Panc1 (cell line): ENCODE measurements at regions of chr17 and their contacts with region 1.

Region 1: GRCh38 chr17:59490216-59490615 is 75.2 kb upstream of the DHX40 start:
- DNase-seq: no peak
- ATAC-seq: no peak
- H3K4me3 ChIP-seq: no peak overlapping the region
- H3K27ac ChIP-seq: no peak overlapping the region
- H3K4me1 ChIP-seq: no peaks in the 10 kb centered on the region
- H3K27me3 ChIP-seq: no peaks in the 10 kb centered on the region
- CTCF ChIP-seq: no peak

Region 2: DNA sequence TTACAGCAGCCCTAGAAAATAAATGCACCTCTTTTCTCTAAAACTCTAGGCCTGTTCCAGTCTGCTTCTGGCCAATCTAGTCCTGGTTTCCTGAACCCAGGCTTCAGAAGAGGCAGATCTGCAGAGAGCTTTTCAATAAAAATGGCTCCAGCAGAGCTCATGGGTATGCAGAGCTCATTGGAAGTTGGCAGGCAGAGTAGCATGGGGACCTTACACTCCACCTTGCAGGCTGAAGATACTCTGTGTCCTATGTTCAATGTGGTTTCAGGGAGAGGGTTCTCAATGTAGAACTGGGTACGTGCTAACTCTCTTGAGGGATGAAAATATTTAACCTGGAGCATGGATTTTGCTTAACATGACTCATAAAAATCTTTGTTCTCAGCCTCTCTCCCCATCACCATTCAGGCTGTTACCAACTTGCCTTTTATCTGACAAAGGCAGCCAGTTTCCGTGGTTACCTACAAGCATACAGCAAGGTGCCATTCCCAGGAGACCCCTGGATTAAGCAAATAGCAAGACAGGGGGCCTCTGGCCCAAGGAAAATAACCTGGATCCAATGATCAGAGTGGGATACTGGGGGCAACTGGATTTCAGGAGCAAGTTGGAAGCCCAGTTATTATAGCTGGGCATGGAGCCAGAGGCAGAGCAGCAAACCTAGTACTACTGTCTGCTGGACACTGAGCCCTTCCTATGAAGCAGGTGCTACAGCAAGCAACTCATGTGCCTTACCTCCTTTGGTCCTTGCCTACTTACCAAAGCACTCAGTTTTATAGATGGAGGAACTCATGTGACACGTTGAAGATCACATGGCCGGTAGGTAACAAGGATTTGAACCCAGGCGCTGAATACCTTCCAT is 23.0 kb before region 1 on chr17:
- CTCF ChIA-PET with region 1: no interaction called
- POLR2A ChIA-PET with region 1: interaction called, 11 read pairs
- in situ Hi-C with region 1: no loop called
- intact Hi-C with region 1: no loop called
- DNase-seq: no peak
- ATAC-seq: no peak
- H3K4me3 ChIP-seq: no peak overlapping the region
- H3K27ac ChIP-seq: no peak overlapping the region
- H3K4me1 ChIP-seq: no peaks in the 10 kb centered on the region
- H3K27me3 ChIP-seq: no peaks in the 10 kb centered on the region
- CTCF ChIP-seq: no peak

Region 3: DNA sequence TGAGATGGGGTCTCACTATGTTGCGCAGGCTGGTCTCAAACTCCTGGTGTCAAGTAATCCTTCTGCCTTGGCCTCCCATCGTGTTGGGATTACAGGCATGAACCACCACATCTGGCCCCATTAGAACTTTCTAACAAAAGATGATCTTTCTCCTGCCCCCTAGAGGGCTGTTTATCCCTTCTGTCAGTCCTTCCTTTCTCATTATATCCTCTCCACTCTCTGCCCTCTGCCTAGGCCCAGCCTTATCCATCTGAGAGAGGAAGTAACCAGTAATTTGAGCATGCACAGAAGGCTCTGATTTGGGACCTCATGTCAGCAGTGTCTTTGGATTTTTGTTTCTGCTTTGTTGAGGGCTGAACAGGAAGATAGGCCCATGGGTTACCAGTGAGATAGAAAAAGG is 70.8 kb after region 1 on chr17:
- CTCF ChIA-PET with region 1: no interaction called
- POLR2A ChIA-PET with region 1: interaction called, 10 read pairs
- in situ Hi-C with region 1: no loop called
- intact Hi-C with region 1: no loop called
- DNase-seq: no peak
- ATAC-seq: no peak
- H3K4me3 ChIP-seq: no peak overlapping the region
- H3K27ac ChIP-seq: no peak overlapping the region
- H3K4me1 ChIP-seq: no peaks in the 10 kb centered on the region
- H3K27me3 ChIP-seq: no peaks in the 10 kb centered on the region
- CTCF ChIP-seq: peak; percentile 57